Left ventricle myocardium superior (tissue), 1 donor: ENCODE measurements at regions of chr6 and their contacts with region 1.

Region 1: GRCh38 chr6:37566111-37566949 is 66.6 kb upstream of the CCDC167 start:
- DNase-seq: peak; percentile 74
- ATAC-seq: peak; percentile 93

Region 2: DNA sequence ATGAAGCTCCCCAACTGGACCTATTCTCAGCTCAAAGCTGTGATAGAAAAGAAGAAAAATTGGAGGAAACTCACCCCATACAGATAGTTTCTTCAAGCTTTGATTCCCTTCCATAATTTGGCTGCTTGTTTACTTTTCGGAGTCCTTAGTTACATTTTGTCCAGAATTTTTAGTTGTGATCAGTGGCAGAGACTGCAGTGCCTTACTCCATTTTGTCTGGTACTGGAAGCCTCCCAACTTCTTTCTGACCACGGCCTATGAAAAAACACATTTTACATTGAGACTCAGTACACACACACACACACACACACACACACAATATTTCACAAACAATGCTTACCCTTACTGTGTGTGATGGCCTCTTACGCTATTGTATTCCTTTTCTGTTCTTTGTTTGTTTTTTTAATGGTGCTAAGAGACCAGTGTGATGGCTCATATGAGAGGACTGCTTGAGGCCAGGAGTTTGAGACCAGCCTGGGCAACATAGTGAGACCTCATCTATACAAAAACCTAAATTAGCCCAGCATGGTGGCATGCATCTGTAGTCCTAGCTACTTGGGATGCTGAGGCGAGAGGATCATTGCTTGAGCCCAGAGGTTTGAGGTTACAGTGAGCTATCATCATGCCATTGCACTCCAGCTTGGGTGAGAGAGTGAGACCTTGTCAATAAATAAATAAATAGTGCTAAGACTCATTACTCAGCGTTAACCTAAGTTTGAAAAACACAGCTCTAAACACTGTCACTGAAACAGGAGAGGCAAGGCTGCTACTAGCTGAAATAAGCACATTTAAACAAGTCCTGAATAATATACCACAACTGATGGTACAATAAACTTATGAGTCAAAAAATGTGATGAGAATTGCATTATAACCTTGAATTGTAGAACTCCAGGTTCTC is 226.3 kb before region 1 on chr6:
- intact Hi-C with region 1: no loop called
- DNase-seq: no peak
- ATAC-seq: no peak

Region 3: GRCh38 chr6:37369321-37370201 is 196.8 kb before region 1 on chr6:
- intact Hi-C with region 1: loop called (anchors 10 kb)
- DNase-seq: no peak
- ATAC-seq: peak; percentile 54